Gastrocnemius medialis (tissue), 4 donors: ENCODE measurements at regions of chr7 and their contacts with region 1.

Region 1: DNA sequence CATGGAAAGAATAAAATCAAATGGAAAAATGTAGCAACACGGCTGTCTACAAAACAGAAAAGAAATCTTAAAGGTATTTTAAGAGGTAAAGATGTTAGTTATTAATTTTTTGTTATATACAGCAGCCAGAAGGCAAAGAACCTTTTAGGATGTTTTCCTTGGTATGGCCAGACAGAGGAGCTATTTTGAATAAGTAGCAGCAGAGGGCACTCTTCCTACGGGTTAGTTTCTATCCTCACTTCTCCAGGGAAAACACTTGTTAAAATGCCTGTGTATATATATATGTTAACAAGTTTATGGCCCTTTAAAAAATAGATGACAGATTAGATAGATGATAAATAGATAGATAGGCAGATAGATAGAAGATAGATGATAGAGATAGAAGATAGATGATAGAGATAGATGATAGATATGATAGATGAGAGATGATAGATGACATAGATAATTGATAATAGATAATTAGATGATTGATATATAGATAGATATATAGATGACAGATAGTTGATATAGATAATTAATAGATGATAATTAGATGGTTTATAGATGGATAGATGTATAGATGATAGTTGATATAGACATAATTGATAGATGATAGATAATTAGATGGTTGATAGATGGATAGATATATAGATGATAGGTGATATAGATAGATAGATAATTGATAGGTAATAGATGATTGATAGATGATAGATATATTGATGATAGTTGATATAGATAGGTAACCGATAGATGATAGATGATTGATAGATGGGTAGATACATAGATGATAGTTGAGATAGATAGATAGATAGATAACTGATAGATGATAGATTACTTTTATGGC is 57.8 kb upstream of the WIPF3 start:
- DNase-seq: no peak
- ATAC-seq: peak; percentile 82 to 93
- H3K4me3 ChIP-seq: no peak overlapping the region
- H3K27ac ChIP-seq: no peak overlapping the region
- H3K4me1 ChIP-seq: no peaks in the 10 kb centered on the region
- H3K27me3 ChIP-seq: no peaks in the 10 kb centered on the region
- CTCF ChIP-seq: peak in 4 of 5 experiments; percentile 27 to 66 (median 50)
- POLR2A ChIP-seq: no peak

Region 2: DNA sequence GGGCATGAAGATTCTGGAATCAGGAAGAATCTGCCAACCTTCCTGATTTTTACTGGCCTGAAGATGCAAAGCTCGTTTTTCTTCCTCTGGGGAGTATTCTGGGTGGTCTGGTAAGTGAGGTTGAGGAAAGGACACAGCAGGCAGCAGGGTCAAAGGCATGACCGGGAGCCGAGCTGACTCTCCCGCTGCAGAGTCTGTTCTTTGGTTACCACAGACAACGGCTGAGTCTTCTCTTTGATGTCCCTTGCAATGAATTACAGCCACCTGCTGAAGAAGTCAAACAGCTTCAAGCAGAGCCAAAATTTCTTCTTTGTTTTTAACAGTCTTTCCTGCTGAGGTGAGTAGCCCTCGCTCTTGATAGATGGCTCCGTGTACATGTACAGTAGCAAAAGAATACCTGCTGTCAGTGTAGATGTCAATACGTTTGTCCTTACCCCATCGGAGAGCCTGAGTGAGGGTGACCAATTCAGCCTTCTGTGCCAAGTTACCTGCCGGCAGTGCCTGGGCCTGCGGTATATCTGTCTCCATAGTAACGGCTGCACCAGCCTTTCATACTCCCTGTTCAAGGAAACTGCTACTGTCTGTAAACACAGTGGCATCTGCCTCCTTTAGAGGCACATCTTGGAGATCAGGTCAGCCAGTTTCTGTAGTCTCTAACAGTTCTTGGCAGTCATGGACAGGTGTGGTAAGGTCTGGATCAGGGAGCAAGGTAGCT is 108.5 kb before region 1 on chr7:
- in situ Hi-C with region 1: no loop called
- intact Hi-C with region 1: loop called (anchors 10 kb)
- DNase-seq: no peak
- ATAC-seq: no peak
- H3K4me3 ChIP-seq: no peak overlapping the region
- H3K27ac ChIP-seq: no peak overlapping the region
- H3K4me1 ChIP-seq: no peaks in the 10 kb centered on the region
- H3K27me3 ChIP-seq: no peaks in the 10 kb centered on the region
- CTCF ChIP-seq: no peak
- POLR2A ChIP-seq: no peak

Region 3: DNA sequence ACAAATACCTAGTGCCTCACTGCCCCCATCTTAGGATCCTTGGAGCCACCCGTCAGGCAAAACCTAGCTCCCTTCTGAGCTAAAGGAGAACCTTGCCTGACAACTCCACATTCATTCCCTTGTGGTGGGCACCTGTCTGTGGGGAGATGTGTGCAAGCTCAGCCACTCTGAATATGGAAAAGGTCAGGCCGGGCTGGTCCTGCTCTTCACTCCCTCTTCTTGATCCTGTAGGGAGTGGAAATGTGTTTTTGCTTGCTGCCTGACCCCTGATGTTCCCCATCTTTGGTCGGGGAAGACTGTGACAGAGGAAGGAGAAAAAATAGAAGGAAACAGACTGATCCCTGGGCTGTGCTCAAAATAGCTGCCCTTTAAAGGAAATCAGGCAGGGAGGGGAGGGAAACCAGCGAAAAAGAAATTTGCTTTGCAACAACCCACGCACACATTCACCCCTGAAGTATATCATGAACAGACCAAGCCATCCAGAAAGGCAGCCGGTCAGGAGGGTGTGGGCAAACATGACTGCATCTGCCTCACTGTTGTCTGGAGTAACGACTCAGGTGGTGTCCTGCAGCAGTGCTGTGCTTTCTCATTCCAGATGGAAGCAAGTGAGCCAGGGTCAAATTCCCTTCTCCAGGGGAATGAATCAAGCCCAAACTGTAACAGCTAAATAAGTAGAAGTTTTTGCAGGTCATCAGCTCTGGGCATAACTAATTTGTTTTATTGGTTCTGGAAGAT is 167.2 kb after region 1 on chr7:
- in situ Hi-C with region 1: loop called in 3 of 4 experiments (anchors 5 to 25 kb)
- intact Hi-C with region 1: no loop called
- DNase-seq: no peak
- ATAC-seq: peak in 1 of 2 donors; percentile 30
- H3K4me3 ChIP-seq: no peak overlapping the region
- H3K27ac ChIP-seq: no peak overlapping the region
- H3K4me1 ChIP-seq: no peaks in the 10 kb centered on the region
- H3K27me3 ChIP-seq: no peaks in the 10 kb centered on the region
- CTCF ChIP-seq: no peak
- POLR2A ChIP-seq: no peak